ENCODE measurements at regions of chr18 and their contacts with region 1.

Region 1: GRCh38 chr18:12106471-12106870 is 12.8 kb downstream of the ANKRD62 start:
- DNase-seq: no peak
- H3K4me3 ChIP-seq: no peak overlapping the region
- H3K27ac ChIP-seq: no peak overlapping the region
- H3K4me1 ChIP-seq: no peaks in the 10 kb centered on the region
- H3K27me3 ChIP-seq: no peaks in the 10 kb centered on the region
- CTCF ChIP-seq: no peak
- EP300 ChIP-seq: no peak
- POLR2A ChIP-seq: no peak

Region 2: GRCh38 chr18:11500153-11501122 is 606.0 kb before region 1 on chr18:
- intact Hi-C with region 1: no loop called
- DNase-seq: no peak
- H3K4me3 ChIP-seq: no peak overlapping the region
- H3K27ac ChIP-seq: no peak overlapping the region
- H3K4me1 ChIP-seq: peaks cover 0 to 3% (median 0%) of the 10 kb centered on the region in 4 donors
- H3K27me3 ChIP-seq: no peaks in the 10 kb centered on the region
- CTCF ChIP-seq: no peak
- EP300 ChIP-seq: no peak
- POLR2A ChIP-seq: no peak

Region 3: GRCh38 chr18:13147130-13147529 is 1040.7 kb after region 1 on chr18:
- intact Hi-C with region 1: loop called (anchors 10 kb)
- DNase-seq: no peak
- H3K4me3 ChIP-seq: no peak overlapping the region
- H3K27ac ChIP-seq: no peak overlapping the region
- H3K4me1 ChIP-seq: no peaks in the 10 kb centered on the region
- H3K27me3 ChIP-seq: no peaks in the 10 kb centered on the region
- CTCF ChIP-seq: no peak
- EP300 ChIP-seq: no peak
- POLR2A ChIP-seq: no peak

Measured in sigmoid colon (tissue), 7 donors.